Activated CD4-positive, alpha-beta memory T cell treated with anti-CD3 and anti-CD28 coated beads for 36 hours (primary cell): ENCODE measurements at regions of chr2 and their contacts with region 1.

Region 1: DNA sequence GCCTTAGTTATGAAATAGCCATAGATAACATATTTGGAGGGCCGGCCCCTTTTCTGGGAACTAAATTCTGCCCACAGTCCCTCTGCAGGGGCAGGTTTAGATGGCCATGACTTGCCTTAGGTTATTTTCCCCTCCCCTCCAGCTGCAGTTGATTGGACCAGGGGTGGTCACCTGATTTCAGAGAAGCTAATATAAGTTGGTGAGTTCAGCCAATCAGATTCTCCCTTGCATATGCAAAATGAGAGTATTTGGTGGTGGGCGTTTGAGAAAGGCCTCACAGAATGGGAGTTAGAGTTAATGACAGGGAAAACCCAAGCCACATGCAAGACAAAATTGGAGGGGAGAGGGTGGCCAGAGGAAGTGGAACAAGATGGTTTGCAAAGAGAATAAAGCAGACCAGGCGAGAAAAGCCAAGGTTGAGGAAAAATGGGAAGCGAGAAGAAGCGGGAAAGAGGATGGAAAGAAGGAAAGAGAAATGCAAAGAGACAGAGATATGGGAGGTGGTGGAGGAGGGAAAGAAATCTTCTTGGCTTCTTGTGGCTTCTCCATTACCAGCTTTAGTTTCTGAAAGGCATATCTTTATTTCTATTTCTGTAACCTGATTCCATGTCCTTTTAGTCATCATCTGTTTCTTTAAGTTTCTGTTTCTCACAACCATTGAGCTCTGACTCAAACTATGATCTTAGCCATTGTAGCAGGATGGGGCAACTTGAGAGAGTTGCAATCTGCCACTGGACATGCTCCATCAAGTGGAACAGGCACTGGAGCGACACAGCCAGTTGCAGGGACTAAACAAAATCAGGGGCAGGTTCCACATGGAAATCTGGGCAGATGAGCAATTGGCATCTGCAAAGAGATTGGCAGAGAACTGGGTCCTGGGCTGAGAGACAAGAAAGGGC is 108.1 kb upstream of the SIX3 start:
- DNase-seq: peak; percentile 16
- H3K4me3 Mint-ChIP-seq: no peak overlapping the region
- H3K27ac Mint-ChIP-seq: peak overlapping the region; percentile 30
- H3K4me1 Mint-ChIP-seq: peaks cover 17% of the 10 kb centered on the region
- H3K27me3 Mint-ChIP-seq: peaks cover 7% of the 10 kb centered on the region

Region 2: GRCh38 chr2:43773876-43774613 is 1059.4 kb before region 1 on chr2 and contains the start of gene DYNC2LI1:
- CTCF ChIA-PET with region 1: no interaction called
- POLR2A ChIA-PET with region 1: no interaction called
- intact Hi-C with region 1: loop called (anchors 10 kb)
- DNase-seq: peak; percentile 91
- H3K4me3 Mint-ChIP-seq: peak within 1 kb of the TSS; percentile 95
- H3K27ac Mint-ChIP-seq: peak within 1 kb of the TSS; percentile 82
- H3K4me1 Mint-ChIP-seq: peaks cover 25% of the 10 kb centered on the region
- H3K27me3 Mint-ChIP-seq: no peaks in the 10 kb centered on the region
- total RNA-seq, gene DYNC2LI1: 17.7 to 18.7 TPM

Region 3: GRCh38 chr2:44578421-44579135 is 254.8 kb before region 1 on chr2:
- CTCF ChIA-PET with region 1: no interaction called
- POLR2A ChIA-PET with region 1: no interaction called
- intact Hi-C with region 1: loop called (anchors 1 kb)
- DNase-seq: no peak
- H3K4me3 Mint-ChIP-seq: peak overlapping the region; percentile 4
- H3K27ac Mint-ChIP-seq: no peak overlapping the region
- H3K4me1 Mint-ChIP-seq: peaks cover 32% of the 10 kb centered on the region
- H3K27me3 Mint-ChIP-seq: no peaks in the 10 kb centered on the region

Region 4: DNA sequence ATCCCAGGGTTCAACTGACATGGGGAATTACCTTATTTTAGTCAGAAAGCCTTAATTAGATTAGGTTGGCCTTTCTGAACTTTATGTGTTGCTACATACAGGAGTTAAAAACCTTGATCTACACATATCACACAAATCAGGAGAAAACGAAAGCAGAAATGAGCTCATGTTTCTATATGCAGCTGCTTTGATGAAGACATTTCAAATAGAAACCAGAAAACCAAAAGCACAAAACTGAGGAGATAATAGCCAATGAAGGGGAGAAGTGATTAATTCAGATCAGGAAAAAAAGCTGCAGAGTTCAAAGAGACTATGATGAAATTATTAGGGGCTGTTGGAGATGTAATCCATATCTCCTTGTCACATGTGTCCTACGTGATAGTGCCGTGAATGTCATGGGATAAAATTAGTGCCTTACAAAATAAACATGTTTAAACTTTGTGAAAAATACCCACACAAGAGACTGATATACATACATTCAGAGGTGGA is 216.7 kb before region 1 on chr2:
- CTCF ChIA-PET with region 1: no interaction called
- POLR2A ChIA-PET with region 1: no interaction called
- intact Hi-C with region 1: loop called (anchors 1 kb)
- DNase-seq: no peak
- H3K4me3 Mint-ChIP-seq: no peak overlapping the region
- H3K27ac Mint-ChIP-seq: no peak overlapping the region
- H3K4me1 Mint-ChIP-seq: peaks cover 6% of the 10 kb centered on the region
- H3K27me3 Mint-ChIP-seq: no peaks in the 10 kb centered on the region

Region 5: DNA sequence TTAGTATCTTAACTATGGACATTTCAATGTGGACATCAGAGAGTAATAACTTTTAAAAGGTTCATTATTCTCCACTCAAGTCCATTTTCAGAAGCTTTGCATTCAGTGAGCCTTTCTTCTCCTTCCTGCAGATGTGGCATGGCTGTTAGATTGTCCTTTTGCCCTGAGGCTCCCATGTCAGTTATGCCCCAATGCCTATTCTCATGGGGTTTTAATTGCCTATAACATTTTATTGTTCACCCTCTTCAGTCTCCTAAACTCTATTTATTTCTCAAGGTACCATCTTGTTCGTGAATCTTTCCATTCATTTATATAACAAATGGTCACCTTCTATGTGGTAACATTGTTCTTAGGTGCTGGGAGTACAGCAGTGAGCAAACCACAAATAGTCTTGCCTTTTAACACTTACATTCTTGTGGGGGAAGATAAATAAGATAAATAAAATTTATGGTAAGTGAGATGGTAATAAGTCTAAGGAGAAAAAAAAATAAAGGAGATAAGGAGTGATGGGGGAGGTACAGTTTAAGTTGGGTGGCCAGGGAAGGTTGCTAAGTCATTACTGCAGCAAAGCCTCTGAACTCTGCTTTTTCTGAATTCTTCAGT is 169.8 kb before region 1 on chr2:
- CTCF ChIA-PET with region 1: no interaction called
- POLR2A ChIA-PET with region 1: no interaction called
- intact Hi-C with region 1: no loop called
- DNase-seq: no peak
- H3K4me3 Mint-ChIP-seq: no peak overlapping the region
- H3K27ac Mint-ChIP-seq: no peak overlapping the region
- H3K4me1 Mint-ChIP-seq: no peaks in the 10 kb centered on the region
- H3K27me3 Mint-ChIP-seq: no peaks in the 10 kb centered on the region

Region 6: DNA sequence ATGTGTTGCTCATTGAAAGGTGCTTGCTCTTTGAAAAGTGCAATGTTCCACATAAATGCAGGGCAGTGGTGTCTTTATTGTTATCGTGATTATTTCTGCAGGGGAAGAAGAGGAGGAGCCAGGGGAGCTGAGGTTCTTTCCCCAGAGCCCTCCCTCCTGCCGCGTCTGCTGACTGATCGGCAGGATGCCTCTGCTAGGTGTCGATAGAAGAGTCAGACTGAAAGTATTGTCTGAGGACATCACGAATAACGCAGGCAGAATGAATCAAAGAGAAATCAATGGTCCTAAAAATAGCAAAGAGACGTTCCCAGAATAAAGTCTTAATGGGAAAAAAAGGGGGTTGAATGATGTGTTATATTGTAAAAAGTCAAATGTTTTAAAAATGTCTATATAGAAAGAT is 60.6 kb after region 1 on chr2:
- CTCF ChIA-PET with region 1: no interaction called
- POLR2A ChIA-PET with region 1: no interaction called
- intact Hi-C with region 1: loop called (anchors 1 kb)
- DNase-seq: peak; percentile 48
- H3K4me3 Mint-ChIP-seq: no peak overlapping the region
- H3K27ac Mint-ChIP-seq: no peak overlapping the region
- H3K4me1 Mint-ChIP-seq: peaks cover 10% of the 10 kb centered on the region
- H3K27me3 Mint-ChIP-seq: peaks cover 8% of the 10 kb centered on the region

Region 7: DNA sequence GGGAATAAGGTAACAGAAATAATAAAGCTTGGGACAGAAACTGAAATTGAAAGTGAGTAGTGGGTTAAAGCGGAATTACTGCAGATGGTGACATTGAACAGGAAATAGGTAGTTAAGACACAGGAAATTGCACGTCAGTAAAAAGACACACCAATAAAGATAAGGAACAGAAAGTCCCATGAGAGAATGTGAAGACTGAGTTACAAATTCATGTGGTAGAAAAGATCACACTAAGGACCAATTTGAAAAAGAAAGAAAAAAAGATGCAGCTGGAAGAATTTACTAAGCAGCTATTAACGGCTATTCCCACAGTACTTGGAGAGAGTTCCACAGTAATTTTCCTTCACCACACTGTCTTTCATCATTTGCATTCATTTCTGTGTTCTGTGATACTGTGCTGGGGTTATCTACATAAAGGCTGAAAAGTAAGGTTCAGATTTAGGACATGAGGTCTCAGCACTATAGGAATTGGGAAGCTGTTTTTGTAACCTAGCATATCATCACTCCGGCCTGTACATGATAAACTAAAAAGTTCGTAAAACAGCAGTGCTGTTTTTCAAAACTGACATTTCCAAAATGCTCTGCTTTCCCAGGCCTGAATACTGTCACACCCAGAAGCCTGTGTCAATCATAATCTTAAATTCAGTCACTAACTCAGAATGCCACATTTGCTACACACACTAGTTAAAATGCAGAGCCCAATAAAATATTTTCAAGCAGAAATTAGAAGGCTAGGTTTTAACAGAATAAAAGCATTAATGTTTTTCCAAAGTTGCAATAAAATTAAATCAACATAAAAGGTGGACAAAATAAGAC is 734.8 kb after region 1 on chr2:
- CTCF ChIA-PET with region 1: no interaction called
- POLR2A ChIA-PET with region 1: no interaction called
- intact Hi-C with region 1: loop called (anchors 10 kb)
- DNase-seq: no peak
- H3K4me3 Mint-ChIP-seq: peak overlapping the region; percentile 60
- H3K27ac Mint-ChIP-seq: peak overlapping the region; percentile 89
- H3K4me1 Mint-ChIP-seq: peaks cover 20% of the 10 kb centered on the region
- H3K27me3 Mint-ChIP-seq: no peaks in the 10 kb centered on the region